ENCODE measurements at regions of chr10 and their contacts with region 1.

Region 1: GRCh38 chr10:30529373-30529998 is 95.5 kb downstream of the MAP3K8 start:
- DNase-seq: peak; percentile 47 to 89 (median 80)
- ATAC-seq: peak; percentile 88 to 92
- H3K4me3 Mint-ChIP-seq: peak overlapping the region; percentile 84 to 92 (median 89)
- H3K27ac Mint-ChIP-seq: peak overlapping the region; percentile 97 to 99 (median 98)
- H3K4me1 Mint-ChIP-seq: peaks cover 22 to 78% (median 55%) of the 10 kb centered on the region in 4 donors
- H3K27me3 Mint-ChIP-seq: no peaks in the 10 kb centered on the region

Region 2: DNA sequence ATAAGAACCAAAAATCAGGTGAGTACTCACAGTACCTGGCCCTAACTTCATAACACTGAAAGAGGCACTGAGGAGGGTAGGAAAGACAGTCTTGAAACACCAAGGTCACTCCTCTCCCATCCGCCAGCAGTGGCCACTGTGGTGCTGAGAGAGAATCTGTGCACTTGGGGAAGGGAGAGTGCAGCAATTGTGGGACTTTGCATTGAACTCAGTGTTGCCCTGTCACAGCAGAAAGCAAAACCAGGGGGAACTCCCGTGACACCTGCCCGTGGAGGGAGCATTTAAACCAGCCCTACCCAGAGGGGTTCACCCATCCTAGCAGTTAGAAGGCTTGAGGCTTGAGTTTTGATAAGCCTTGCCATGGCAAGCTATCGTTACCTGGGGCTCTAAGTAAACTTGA is 130.7 kb before region 1 on chr10:
- POLR2A ChIA-PET with region 1: interaction called, 11 read pairs
- DNase-seq: peak in 2 of 10 donors; percentile 17 to 25
- ATAC-seq: peak; percentile 61 to 75
- H3K4me3 Mint-ChIP-seq: peak overlapping the region in 7 of 10 donors; percentile 3 to 70 (median 31)
- H3K27ac Mint-ChIP-seq: peak overlapping the region in 4 of 10 donors; percentile 21 to 38 (median 22)
- H3K4me1 Mint-ChIP-seq: peaks cover 15 to 24% (median 21%) of the 10 kb centered on the region in 4 donors
- H3K27me3 Mint-ChIP-seq: peaks cover 4 to 18% (median 13%) of the 10 kb centered on the region in 5 donors

Region 3: GRCh38 chr10:30433730-30434272 is 95.7 kb before region 1 on chr10 and contains the start of gene MAP3K8:
- POLR2A ChIA-PET with region 1: interaction called, 12 read pairs
- DNase-seq: peak; percentile 61 to 84 (median 72)
- ATAC-seq: peak; percentile 78 to 80
- H3K4me3 Mint-ChIP-seq: peak within 1 kb of the TSS; percentile 76 to 92 (median 88)
- H3K27ac Mint-ChIP-seq: peak within 1 kb of the TSS; percentile 32 to 93 (median 76)
- H3K4me1 Mint-ChIP-seq: peaks cover 24 to 67% (median 46%) of the 10 kb centered on the region in 4 donors
- H3K27me3 Mint-ChIP-seq: no peaks in the 10 kb centered on the region
- polyA plus RNA-seq, gene MAP3K8: 0.53 to 23.4 (median 0.80) TPM

Region 4: DNA sequence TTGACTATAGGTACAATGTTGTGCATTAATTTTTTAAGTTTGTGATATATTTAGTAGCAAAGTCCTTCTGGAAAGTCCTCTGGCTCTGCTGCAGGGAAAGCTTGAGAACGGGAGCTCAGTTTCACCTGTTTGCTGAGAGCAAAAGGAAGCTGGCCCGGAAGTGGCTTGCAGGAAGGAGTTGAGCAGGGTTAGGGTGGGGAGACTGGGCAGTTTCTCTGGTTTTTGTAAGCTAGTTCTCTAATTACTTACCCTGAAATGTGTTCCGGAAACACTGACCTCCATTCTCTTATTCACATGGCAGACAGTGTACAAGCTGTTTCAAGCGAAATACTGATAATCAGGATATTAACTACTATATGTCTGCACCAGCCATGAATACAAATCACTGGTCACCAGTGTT is 73.2 kb before region 1 on chr10:
- POLR2A ChIA-PET with region 1: interaction called, 12 read pairs
- DNase-seq: peak in 3 of 10 donors; percentile 10 to 24 (median 22)
- ATAC-seq: peak; percentile 82 to 83
- H3K4me3 Mint-ChIP-seq: peak overlapping the region; percentile 63 to 82 (median 77)
- H3K27ac Mint-ChIP-seq: peak overlapping the region; percentile 60 to 89 (median 82)
- H3K4me1 Mint-ChIP-seq: peaks cover 15 to 50% (median 29%) of the 10 kb centered on the region in 4 donors
- H3K27me3 Mint-ChIP-seq: no peaks in the 10 kb centered on the region

Measured in naive thymus-derived CD8-positive, alpha-beta T cell (primary cell).